ENCODE measurements at regions of chr2 and their contacts with region 1.

Region 1: GRCh38 chr2:109497463-109497862 is 116.3 kb downstream of the SEPTIN10 start:
- DNase-seq: no peak
- ATAC-seq: no peak
- H3K4me3 ChIP-seq: no peak overlapping the region
- H3K27ac ChIP-seq: no peak overlapping the region
- H3K4me1 ChIP-seq: no peaks in the 10 kb centered on the region
- CTCF ChIP-seq: no peak
- EP300 ChIP-seq: no peak
- POLR2A ChIP-seq: no peak
- RAD21 ChIP-seq: no peak

Region 2: GRCh38 chr2:109128048-109128465 is 369.4 kb before region 1 on chr2:
- CTCF ChIA-PET with region 1: interaction called, 11 read pairs
- POLR2A ChIA-PET with region 1: no interaction called
- DNase-seq: peak; percentile 77 to 82
- ATAC-seq: peak; percentile 76 to 92
- H3K4me3 ChIP-seq: peak overlapping the region; percentile 64
- H3K27ac ChIP-seq: peak overlapping the region; percentile 44 to 74; a peak in 4 of 6 replicates
- H3K4me1 ChIP-seq: peaks cover 14% of the 10 kb centered on the region
- CTCF ChIP-seq: peak; percentile 87
- EP300 ChIP-seq: no peak
- POLR2A ChIP-seq: no peak
- RAD21 ChIP-seq: peak; percentile 86 to 92

Region 3: GRCh38 chr2:109173311-109174171 is 323.9 kb before region 1 on chr2:
- CTCF ChIA-PET with region 1: no interaction called
- POLR2A ChIA-PET with region 1: no interaction called
- DNase-seq: no peak
- ATAC-seq: no peak
- H3K4me3 ChIP-seq: no peak overlapping the region
- H3K27ac ChIP-seq: no peak overlapping the region
- H3K4me1 ChIP-seq: no peaks in the 10 kb centered on the region
- CTCF ChIP-seq: no peak
- EP300 ChIP-seq: no peak
- POLR2A ChIP-seq: no peak
- RAD21 ChIP-seq: no peak

Region 4: DNA sequence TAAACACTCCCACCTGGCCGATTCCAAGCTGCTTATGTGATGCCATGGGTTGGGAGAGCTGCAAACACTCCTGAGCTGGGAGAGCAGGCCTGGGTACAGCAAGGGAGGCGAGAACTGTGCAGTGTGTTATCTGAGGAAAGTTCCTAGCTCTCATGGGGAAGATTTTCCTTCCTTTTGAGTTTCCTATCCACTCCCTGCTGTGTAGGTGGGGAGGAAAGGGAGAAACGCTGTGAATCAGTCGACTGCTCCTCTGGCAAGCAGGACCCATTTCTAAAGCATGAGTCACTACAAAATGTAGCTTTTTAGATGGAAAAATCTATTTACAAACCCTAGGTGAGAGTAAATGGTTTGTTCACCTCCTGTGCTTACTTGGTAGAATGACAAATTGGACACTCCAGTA is 288.1 kb before region 1 on chr2:
- CTCF ChIA-PET with region 1: no interaction called
- POLR2A ChIA-PET with region 1: no interaction called
- DNase-seq: peak in 1 of 2 experiments; percentile 13
- ATAC-seq: peak; percentile 56 to 62; a peak in 5 of 6 replicates
- H3K4me3 ChIP-seq: no peak overlapping the region
- H3K27ac ChIP-seq: peak overlapping the region in 1 of 2 experiments; percentile 60; a peak in 2 of 6 replicates
- H3K4me1 ChIP-seq: peaks cover 11% of the 10 kb centered on the region
- CTCF ChIP-seq: no peak
- EP300 ChIP-seq: no peak
- POLR2A ChIP-seq: no peak
- RAD21 ChIP-seq: no peak

Region 5: GRCh38 chr2:109624339-109624738 is 126.9 kb after region 1 on chr2:
- CTCF ChIA-PET with region 1: no interaction called
- POLR2A ChIA-PET with region 1: no interaction called
- DNase-seq: no peak
- ATAC-seq: no peak
- H3K4me3 ChIP-seq: no peak overlapping the region
- H3K27ac ChIP-seq: no peak overlapping the region
- H3K4me1 ChIP-seq: no peaks in the 10 kb centered on the region
- CTCF ChIP-seq: no peak
- EP300 ChIP-seq: no peak
- POLR2A ChIP-seq: no peak
- RAD21 ChIP-seq: no peak

Measured in A549 (cell line).